Heart right ventricle (tissue), 16 donors: ENCODE measurements at regions of chr11 and their contacts with region 1.

Region 1: DNA sequence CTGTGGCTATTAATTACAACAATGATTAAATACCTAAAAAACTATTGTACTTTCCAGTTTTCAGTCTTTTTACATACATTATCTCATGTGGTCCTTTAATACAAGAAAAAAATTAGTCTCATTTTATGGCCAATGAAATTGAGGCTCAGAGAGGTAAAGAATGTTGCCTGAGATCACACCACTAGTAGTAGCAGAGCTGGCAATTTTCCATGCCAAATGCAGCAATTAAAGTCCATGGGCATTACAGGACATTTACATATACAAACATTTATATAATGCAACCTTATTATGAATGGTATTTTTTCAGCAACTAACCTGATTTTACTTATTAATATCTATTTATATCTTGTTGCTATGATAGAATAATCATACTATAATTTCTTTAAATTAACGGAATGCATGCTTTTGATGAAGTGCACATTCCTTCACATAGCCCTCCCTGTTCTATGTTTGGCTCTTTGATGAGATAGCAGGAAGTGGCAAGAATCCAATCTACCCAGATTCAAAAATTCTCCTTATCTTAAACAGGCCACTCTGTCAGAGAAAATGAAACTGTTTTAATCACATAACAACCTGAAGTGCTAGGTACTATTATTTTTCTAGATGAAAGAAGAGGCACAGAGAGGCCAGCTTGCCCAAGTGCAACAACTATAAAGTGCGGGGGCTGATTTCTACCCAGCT is 120.9 kb upstream of the LDLRAD3 start:
- DNase-seq: no peak
- ATAC-seq: no peak
- H3K4me3 ChIP-seq: no peak overlapping the region
- H3K27ac ChIP-seq: no peak overlapping the region
- H3K4me1 ChIP-seq: peaks cover 0 to 34% (median 25%) of the 10 kb centered on the region in 9 donors
- H3K27me3 ChIP-seq: no peaks in the 10 kb centered on the region
- CTCF ChIP-seq: no peak

Region 2: DNA sequence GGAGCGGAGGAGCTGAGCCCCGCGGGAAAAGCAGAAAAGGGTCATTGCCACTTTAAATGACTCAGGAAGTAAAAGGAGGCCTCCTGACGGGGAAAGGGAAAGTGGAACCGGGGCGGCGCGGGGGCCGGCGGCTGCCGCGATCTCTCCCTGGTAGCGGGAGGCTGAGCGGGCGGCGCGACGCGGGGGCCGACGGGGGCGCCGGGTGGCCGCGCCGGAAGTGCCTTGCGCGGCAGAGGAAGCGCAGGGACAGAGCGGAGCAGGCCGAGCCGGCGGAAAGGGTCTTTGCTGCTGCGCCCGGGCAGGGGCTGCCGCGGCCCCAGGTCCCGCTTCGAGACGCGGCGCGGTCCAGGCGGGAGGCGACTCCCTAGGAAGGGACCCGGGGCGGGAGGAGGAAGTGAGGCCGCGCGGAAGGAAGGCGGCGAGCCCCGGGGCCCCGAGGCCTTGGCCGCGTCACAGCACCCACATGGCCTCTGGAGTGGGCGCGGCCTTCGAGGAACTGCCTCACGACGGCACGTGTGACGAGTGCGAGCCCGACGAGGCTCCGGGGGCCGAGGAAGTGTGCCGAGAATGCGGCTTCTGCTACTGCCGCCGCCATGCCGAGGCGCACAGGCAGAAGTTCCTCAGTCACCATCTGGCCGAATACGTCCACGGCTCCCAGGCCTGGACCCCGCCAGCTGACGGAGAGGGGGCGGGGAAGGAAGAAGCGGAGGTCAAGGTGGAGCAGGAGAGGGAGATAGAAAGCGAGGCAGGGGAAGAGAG is 160.1 kb before region 1 on chr11 and contains the start of gene TRIM44:
- intact Hi-C with region 1: loop called in 4 of 10 experiments (anchors 2 to 10 kb)
- DNase-seq: peak; percentile 87 to 88
- ATAC-seq: peak; percentile 93 to 97 (median 96)
- H3K4me3 ChIP-seq: peak within 1 kb of the TSS; percentile 52 to 93 (median 76)
- H3K27ac ChIP-seq: peak within 1 kb of the TSS; percentile 88 to 99 (median 96)
- H3K4me1 ChIP-seq: peaks cover 0 to 30% (median 19%) of the 10 kb centered on the region in 9 donors
- H3K27me3 ChIP-seq: peaks cover 0 to 2% (median 0%) of the 10 kb centered on the region in 7 donors
- CTCF ChIP-seq: no peak
- total RNA-seq, gene TRIM44: 37.7 to 59.2 (median 46.8) TPM

Region 3: DNA sequence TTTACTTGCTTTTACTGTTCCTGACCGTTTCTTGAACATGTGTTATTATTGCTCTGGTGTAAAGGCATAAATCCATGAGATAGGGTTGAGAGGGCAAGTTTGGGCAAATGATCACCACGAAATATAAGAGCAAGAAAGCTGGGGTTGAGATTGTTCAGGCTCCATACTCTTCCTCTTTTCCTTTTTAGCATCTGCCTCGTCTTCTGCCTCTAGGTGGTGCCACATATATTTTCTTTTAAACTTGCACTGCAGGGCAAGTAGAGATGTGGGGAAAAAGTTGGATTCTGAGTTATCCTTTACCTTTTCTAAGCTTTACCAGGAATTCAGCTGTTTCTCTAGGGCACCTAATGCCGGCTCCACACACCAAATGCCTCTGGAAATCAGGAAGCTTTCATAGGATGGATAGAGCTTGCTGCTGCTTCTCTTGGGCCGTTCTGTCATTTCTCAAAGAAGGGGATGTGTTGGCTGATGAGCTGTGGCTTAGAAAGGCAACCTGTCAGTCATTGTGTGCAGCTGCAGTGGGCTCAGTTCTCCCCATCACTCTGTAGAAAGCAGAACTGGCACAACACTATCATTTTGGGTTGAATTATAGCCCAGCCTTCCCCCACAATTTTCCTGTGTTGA is 219.1 kb after region 1 on chr11:
- intact Hi-C with region 1: loop called in 1 of 10 experiments (anchors 10 kb)
- DNase-seq: no peak
- ATAC-seq: peak in 2 of 8 donors; percentile 50 to 58
- H3K4me3 ChIP-seq: no peak overlapping the region
- H3K27ac ChIP-seq: no peak overlapping the region
- H3K4me1 ChIP-seq: peaks cover 0 to 7% (median 0%) of the 10 kb centered on the region in 9 donors
- H3K27me3 ChIP-seq: no peaks in the 10 kb centered on the region
- CTCF ChIP-seq: peak; percentile 15 to 64 (median 53)

Region 4: DNA sequence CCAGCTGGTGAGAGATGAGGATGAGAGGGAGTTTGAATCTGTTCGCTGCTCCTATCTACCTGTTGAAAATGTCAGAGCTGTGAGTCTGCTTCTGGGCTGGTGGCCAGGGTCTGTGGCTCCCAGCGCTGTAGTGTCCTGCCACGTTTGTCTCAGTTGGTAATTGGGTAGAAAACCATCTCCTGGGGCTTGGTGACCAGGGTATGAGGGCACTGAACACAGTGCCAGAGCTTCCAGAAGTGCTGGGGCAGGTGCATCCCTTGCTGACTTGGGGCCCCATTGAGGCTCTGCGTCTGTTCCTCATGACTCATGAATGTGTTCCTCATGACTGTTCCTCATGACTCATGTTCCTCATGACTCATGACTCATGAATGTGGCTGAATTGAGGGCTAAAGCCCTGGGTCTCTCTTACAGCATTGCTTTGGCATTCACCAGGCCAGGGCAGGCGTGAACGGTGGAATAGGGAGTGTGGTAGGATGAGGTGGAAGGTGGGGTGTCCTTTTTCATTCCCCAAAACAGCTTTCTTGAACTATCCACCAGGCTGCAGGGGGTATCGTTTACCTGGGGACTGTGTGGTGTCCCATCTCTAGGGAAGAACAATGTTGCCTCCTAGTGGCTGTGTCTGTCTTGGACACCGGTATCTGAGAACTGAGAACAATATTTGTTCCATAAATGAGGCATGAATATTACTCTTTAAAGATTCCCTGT is 326.7 kb after region 1 on chr11:
- intact Hi-C with region 1: loop called in 1 of 10 experiments (anchors 10 kb)
- DNase-seq: peak in 1 of 2 donors; percentile 23
- ATAC-seq: peak; percentile 38 to 96 (median 64)
- H3K4me3 ChIP-seq: no peak overlapping the region
- H3K27ac ChIP-seq: peak overlapping the region in 1 of 10 donors; percentile 66
- H3K4me1 ChIP-seq: peaks cover 0 to 37% (median 4%) of the 10 kb centered on the region in 9 donors
- H3K27me3 ChIP-seq: peaks cover 0 to 16% (median 0%) of the 10 kb centered on the region in 7 donors
- CTCF ChIP-seq: peak in 5 of 9 donors; percentile 36 to 48 (median 38)

Region 5: DNA sequence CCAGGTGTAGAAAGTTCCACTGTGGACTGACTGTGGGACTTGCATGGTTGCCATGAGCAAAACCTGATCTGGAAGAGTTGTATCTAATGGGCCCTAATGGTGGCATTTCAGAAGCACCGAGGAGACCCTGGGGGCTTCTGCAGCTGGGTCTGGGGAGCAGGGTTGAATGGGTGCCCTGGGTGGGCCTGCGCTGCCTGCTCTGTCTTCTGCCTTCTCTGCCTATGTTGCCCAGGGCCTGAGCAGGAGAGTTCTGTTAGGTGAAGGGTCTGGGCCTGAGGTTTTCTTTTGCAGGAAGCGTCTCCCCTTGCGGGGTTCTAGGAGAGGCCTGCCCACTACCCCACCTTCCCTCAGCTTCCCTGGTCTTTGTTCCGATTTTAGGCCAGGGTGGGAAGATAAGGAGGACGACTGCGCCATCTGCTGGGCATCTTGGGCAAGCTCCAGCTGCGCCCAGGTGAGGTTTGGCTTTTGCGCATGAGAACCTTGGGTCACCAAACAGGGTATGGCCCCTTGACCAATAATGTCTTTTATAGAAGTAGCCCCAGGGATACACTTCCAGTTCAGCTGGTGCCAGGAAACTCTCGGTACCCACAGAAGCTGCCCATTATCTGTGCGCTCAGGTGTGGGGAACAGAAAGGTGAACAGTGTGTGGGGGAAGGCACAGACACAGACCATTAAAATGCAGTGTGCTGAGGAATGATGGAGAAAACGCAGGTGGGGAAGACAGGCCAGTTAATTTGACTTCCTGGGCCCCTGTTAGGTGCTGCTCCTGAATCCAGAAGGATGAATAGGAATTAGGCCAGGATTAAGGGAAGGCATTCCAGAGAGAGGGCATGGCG is 443.1 kb after region 1 on chr11:
- intact Hi-C with region 1: loop called in 8 of 10 experiments (anchors 5 to 10 kb)
- DNase-seq: peak; percentile 20 to 56
- ATAC-seq: peak; percentile 53 to 78 (median 66)
- H3K4me3 ChIP-seq: no peak overlapping the region
- H3K27ac ChIP-seq: no peak overlapping the region
- H3K4me1 ChIP-seq: peaks cover 0 to 6% (median 0%) of the 10 kb centered on the region in 9 donors
- H3K27me3 ChIP-seq: peaks cover 0 to 24% (median 0%) of the 10 kb centered on the region in 7 donors
- CTCF ChIP-seq: peak; percentile 48 to 88 (median 77)